Activated CD4-positive, alpha-beta T cell treated with anti-CD3 and anti-CD28 coated beads for 36 hours (primary cell): ENCODE measurements at regions of chr20 and their contacts with region 1.

Region 1: GRCh38 chr20:9609887-9610502 is 95.6 kb downstream of the LAMP5 start:
- DNase-seq: peak; percentile 71
- ATAC-seq: no peak
- H3K4me3 Mint-ChIP-seq: no peak overlapping the region
- H3K27ac Mint-ChIP-seq: no peak overlapping the region
- H3K4me1 Mint-ChIP-seq: no peaks in the 10 kb centered on the region
- H3K27me3 Mint-ChIP-seq: peaks cover 7% of the 10 kb centered on the region

Region 2: GRCh38 chr20:9280666-9281065 is 329.3 kb before region 1 on chr20:
- CTCF ChIA-PET with region 1: no interaction called
- POLR2A ChIA-PET with region 1: no interaction called
- intact Hi-C with region 1: no loop called
- DNase-seq: no peak
- ATAC-seq: no peak
- H3K4me3 Mint-ChIP-seq: no peak overlapping the region
- H3K27ac Mint-ChIP-seq: no peak overlapping the region
- H3K4me1 Mint-ChIP-seq: no peaks in the 10 kb centered on the region
- H3K27me3 Mint-ChIP-seq: no peaks in the 10 kb centered on the region

Region 3: DNA sequence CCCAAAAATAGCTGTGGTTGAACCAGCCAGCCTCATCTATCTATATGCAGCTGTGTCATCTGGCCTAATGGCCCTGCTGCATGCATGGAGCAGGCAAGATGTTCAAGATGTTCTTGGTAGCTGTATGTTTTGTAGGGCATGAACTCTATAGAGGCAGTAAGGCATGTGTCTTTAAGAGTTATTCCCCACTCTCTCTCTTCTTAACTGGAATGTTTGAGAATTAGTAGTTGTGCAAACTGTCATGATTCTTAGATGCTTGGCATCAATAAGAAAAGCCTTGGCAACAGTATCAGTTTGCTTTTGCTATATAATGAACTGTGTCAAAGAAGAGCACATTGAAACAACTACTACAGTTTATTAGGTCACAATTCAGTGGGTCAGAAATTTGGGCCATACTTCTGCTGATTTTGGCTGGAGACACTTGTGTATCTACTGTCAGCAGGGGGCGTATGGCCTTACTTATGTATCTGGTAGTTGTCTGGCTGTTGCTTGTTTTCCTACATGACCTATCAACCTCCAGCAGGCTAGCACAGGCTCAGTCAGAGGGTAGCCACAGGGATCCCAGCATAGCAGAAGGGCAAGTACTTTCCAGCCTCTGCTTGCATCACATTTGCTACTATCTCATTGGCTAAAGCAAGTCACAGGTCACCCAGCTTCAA is 151.7 kb before region 1 on chr20:
- CTCF ChIA-PET with region 1: interaction called, 4 read pairs
- POLR2A ChIA-PET with region 1: no interaction called
- intact Hi-C with region 1: loop called in 1 of 2 experiments (anchors 5 kb)
- DNase-seq: peak; percentile 6
- ATAC-seq: no peak
- H3K4me3 Mint-ChIP-seq: no peak overlapping the region
- H3K27ac Mint-ChIP-seq: no peak overlapping the region
- H3K4me1 Mint-ChIP-seq: no peaks in the 10 kb centered on the region
- H3K27me3 Mint-ChIP-seq: no peaks in the 10 kb centered on the region

Region 4: GRCh38 chr20:9626357-9626756 is 16.4 kb after region 1 on chr20:
- CTCF ChIA-PET with region 1: no interaction called
- POLR2A ChIA-PET with region 1: no interaction called
- intact Hi-C with region 1: no loop called
- DNase-seq: no peak
- ATAC-seq: no peak
- H3K4me3 Mint-ChIP-seq: no peak overlapping the region
- H3K27ac Mint-ChIP-seq: no peak overlapping the region
- H3K4me1 Mint-ChIP-seq: no peaks in the 10 kb centered on the region
- H3K27me3 Mint-ChIP-seq: peaks cover 2% of the 10 kb centered on the region

Region 5: GRCh38 chr20:10047427-10047826 is 437.4 kb after region 1 on chr20:
- CTCF ChIA-PET with region 1: no interaction called
- POLR2A ChIA-PET with region 1: no interaction called
- intact Hi-C with region 1: no loop called
- DNase-seq: peak; percentile 14
- ATAC-seq: no peak
- H3K4me3 Mint-ChIP-seq: no peak overlapping the region
- H3K27ac Mint-ChIP-seq: no peak overlapping the region
- H3K4me1 Mint-ChIP-seq: no peaks in the 10 kb centered on the region
- H3K27me3 Mint-ChIP-seq: no peaks in the 10 kb centered on the region

Region 6: DNA sequence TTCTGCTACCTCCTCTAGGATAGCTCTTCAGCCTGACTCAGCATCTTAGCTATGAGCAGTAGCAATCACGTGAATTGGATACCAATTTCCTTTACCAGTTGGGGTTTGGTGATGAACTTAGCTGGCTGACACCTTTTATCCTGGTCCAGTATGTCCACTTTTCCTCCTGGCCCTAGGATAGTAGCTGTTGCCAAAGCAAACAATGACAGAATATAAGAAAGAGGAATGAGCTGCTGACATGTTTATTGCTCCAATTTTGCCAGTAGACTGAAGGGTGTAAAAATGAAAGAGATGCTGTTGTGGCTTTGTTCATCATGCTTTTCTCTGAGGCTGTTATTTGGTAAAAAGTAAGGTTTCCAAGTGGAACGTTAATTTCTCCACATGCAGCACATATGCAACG is 1232.1 kb after region 1 on chr20:
- CTCF ChIA-PET with region 1: no interaction called
- POLR2A ChIA-PET with region 1: no interaction called
- intact Hi-C with region 1: no loop called
- DNase-seq: no peak
- ATAC-seq: no peak
- H3K4me3 Mint-ChIP-seq: no peak overlapping the region
- H3K27ac Mint-ChIP-seq: no peak overlapping the region
- H3K4me1 Mint-ChIP-seq: no peaks in the 10 kb centered on the region
- H3K27me3 Mint-ChIP-seq: no peaks in the 10 kb centered on the region